ENCODE measurements at regions of chr1 and their contacts with region 1.

Region 1: DNA sequence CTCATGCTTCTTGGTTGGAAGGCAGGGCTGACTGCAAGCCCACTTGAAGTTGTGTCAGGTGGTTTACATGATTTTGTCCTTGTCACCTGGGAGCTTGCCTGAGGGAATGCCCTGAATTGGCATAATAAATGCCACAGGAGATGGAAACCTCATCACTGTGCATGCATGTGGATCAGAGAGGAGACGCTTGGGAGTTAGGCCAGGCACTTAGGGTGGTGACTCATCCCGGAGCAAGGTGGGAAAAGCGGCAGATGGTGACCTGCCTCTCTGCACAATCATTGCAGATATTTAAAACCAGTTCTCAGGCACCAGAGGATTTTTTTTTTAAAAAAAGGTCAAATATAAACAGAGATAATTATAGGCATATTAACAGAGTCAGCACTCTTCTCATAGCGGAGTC is 202.2 kb upstream of the KIAA0040 start:
- DNase-seq: no peak
- H3K4me3 ChIP-seq: no peak overlapping the region
- H3K27ac ChIP-seq: no peak overlapping the region
- H3K4me1 ChIP-seq: no peaks in the 10 kb centered on the region
- H3K27me3 ChIP-seq: no peaks in the 10 kb centered on the region
- CTCF ChIP-seq: no peak
- POLR2A ChIP-seq: no peak

Region 2: DNA sequence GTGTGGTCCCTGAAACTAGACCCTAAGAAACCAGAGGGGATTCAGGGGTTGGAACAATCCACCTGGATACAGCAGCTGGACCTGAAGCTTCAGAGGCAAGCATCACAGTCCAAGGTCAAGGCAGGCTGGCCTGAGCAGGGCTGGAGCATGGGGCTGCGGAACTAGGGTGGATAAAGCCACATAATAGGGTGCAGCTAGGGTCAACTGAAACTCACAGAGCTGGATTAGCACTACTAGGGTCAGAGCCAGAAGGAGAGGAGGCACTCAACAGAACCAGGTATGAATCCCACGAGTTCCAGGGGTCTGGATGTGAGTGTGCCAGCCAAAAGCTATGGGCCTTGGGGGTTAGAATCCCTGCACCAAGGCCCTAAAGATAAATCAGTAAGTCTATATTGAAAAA is 28.9 kb after region 1 on chr1:
- intact Hi-C with region 1: loop called (anchors 2 kb)
- DNase-seq: no peak
- H3K4me3 ChIP-seq: no peak overlapping the region
- H3K27ac ChIP-seq: no peak overlapping the region
- H3K4me1 ChIP-seq: no peaks in the 10 kb centered on the region
- H3K27me3 ChIP-seq: peaks cover 0 to 7% of the 10 kb centered on the region in 2 donors
- CTCF ChIP-seq: no peak
- POLR2A ChIP-seq: no peak

Measured in breast epithelium (tissue), 4 donors.